ENCODE measurements at regions of chr9 and their contacts with region 1.

Region 1: DNA sequence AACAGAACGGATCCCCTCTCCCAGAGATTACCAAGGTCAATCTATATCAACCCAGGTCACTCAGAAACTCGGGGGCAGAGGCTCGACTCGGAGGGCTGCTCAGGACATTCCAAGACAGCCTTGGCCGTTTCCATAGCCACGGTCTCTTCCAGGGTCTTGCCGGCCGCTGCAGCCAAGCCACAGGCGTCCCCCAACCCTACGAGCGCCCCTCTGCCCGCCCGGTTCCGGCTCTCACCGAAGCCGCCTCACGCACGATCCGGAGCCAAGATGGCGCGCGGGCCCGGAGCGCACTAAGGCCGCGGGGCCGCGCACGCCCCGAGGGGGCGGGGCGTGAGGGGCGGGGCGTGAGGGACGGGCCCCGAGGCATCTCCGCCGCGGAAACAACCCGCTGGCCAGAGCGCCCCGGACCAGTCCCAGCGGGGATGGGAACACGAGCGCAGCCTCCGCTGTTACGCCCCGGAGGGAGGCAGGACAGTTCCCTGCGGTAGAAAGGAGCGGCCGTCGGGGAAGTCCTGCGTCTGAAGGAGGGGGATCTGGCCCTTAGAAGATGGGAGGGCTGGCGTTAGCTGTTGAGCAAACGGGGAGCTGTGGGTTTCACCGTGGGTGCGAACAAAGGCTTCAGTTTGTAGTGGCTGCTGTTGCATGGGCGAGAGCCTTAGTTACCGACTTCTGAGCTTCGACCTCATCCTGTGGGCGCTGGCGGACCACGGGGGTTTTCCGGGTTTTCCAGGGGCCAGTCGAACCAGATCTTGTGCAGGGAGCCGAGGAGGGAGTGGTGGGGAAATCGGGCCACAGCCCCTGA is at the start of gene RPP25L:
- DNase-seq: peak; percentile 91
- ATAC-seq: peak; percentile 97
- H3K4me3 Mint-ChIP-seq: peak within 1 kb of the TSS; percentile 86
- H3K27ac Mint-ChIP-seq: peak within 1 kb of the TSS; percentile 93
- H3K4me1 Mint-ChIP-seq: peaks cover 16% of the 10 kb centered on the region
- H3K27me3 Mint-ChIP-seq: no peaks in the 10 kb centered on the region
- total RNA-seq, gene RPP25L: 29.3 to 35.2 TPM

Region 2: GRCh38 chr9:34522971-34523797 is 88.8 kb before region 1 on chr9 and contains the start of gene ENHO:
- CTCF ChIA-PET with region 1: no interaction called
- POLR2A ChIA-PET with region 1: no interaction called
- intact Hi-C with region 1: loop called in 1 of 2 experiments (anchors 1 kb)
- DNase-seq: peak; percentile 93
- ATAC-seq: peak; percentile 99
- H3K4me3 Mint-ChIP-seq: peak within 1 kb of the TSS; percentile 54
- H3K27ac Mint-ChIP-seq: no peak within 1 kb of the TSS
- H3K4me1 Mint-ChIP-seq: peaks cover 24% of the 10 kb centered on the region
- H3K27me3 Mint-ChIP-seq: peaks cover 11% of the 10 kb centered on the region
- total RNA-seq, gene ENHO: not detected

Region 3: DNA sequence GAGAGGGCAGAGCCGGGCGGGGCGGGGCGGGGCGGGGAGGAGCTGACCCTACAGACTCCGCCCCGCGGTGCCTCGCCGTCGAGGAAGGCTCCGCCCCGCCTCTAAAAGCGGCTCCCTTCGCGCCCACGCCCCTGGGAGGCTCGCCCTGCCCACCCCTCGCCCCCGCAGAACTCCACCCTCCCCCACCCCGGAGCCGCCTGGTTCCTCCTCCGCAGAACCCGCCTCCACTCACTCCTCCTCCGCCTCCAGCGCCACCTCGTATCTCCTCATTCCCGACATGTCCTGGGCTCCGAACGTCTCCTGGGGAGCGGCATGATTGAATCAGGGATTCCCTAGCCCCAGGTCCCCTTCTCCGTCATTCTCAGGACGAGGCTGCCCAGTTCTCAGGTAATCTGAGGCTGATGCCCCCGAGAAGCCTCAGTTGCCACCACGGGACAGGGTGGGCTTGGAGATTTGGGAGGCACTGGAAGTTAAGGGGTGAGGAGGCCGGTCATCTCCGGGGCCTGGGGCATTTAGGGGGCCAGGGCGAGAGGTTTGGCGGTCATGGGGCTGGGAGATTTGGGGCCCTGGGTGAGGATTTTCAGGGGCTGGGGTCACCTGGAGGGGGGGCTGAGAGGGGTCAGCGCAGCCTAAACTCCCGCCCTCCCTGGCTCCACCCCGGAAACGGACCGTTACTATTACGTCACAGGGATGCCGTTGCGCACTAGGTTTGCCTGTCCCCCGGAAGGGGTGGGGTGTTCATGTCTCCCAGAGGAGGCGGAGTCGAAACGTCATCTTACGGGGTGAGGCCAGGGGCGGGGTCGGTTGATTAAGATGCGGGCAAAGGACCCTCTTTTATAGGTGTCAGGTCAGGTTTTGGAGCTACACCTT is 53.6 kb after region 1 on chr9:
- CTCF ChIA-PET with region 1: interaction called, 4 read pairs
- POLR2A ChIA-PET with region 1: no interaction called
- intact Hi-C with region 1: loop called in 1 of 2 experiments (anchors 1 kb)
- DNase-seq: peak; percentile 93
- ATAC-seq: peak; percentile 75
- H3K4me3 Mint-ChIP-seq: peak overlapping the region; percentile 77
- H3K27ac Mint-ChIP-seq: peak overlapping the region; percentile 87
- H3K4me1 Mint-ChIP-seq: peaks cover 33% of the 10 kb centered on the region
- H3K27me3 Mint-ChIP-seq: no peaks in the 10 kb centered on the region